Endothelial cell of umbilical vein (primary cell): ENCODE measurements at regions of chr15 and their contacts with region 1.

Region 1: DNA sequence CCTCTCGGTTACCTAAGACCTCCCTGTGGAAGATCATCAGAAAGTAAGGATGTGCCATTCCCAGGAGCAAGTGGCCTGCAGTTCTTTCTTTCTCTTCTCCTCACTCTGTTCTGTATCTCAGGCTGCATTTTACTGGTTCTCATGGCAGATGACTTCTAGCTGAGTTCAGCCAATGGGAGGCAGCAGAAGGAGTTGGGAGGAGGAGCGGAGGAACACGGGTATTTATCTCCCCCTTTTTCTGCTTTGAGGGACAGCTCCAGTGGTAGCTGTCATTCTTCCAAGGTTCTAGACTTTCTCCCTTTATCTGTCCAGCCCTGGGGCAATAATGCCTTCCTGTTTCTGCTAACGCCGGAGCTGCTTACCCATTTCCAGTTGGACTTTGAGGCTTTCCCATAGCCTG is 339.9 kb downstream of the NR2F2 start:
- DNase-seq: no peak
- H3K4me3 ChIP-seq: no peak overlapping the region
- H3K27ac ChIP-seq: no peak overlapping the region
- H3K4me1 ChIP-seq: no peaks in the 10 kb centered on the region
- H3K27me3 ChIP-seq: no peaks in the 10 kb centered on the region
- CTCF ChIP-seq: no peak
- POLR2A ChIP-seq: no peak

Region 2: DNA sequence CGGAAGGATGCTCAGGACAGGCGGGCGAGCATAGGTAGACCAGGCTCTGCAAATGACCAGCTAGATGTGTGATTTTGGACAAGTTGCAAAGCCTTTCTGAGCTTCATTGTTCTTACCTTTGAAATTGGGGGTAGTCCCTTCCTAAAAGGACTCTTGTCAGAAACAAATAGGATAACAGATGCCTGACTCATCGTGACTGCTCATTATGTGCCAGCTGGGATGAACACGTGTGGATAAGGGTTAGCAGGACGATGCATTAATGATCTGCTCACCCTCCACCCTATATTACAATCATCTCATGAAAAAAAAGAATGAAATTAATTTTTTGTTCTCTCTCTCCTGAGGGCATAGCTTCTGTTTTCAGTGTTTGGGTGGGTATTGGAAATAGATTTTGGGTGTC is 116.5 kb before region 1 on chr15:
- CTCF ChIA-PET with region 1: no interaction called
- POLR2A ChIA-PET with region 1: interaction called, 10 read pairs
- dilution Hi-C with region 1: no loop called
- intact Hi-C with region 1: no loop called
- DNase-seq: no peak
- H3K4me3 ChIP-seq: no peak overlapping the region
- H3K27ac ChIP-seq: no peak overlapping the region
- H3K4me1 ChIP-seq: no peaks in the 10 kb centered on the region
- H3K27me3 ChIP-seq: peaks cover 0 to 2% of the 10 kb centered on the region in 2 experiments
- CTCF ChIP-seq: no peak
- POLR2A ChIP-seq: no peak